Heart left ventricle (tissue), 16 donors: ENCODE measurements at regions of chr6 and their contacts with region 1.

Region 1: DNA sequence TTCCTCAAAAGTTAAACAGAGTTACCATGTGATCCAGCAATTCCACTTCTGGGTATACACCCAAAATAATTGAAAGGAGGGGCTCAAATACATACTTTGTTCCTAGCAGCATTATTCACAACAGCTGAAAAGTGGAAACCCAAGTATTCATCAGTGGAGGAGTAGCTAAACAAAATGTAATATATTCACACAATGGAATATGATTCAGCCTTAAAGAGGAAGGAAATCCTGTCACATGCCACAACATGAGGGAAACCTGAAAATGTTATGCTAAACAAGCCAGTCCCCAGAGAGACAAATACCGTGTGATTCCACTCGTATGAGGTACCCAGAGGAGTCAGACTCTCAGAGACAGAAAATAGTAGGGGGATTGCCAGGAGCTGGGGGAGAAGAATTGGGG is 44.5 kb downstream of the PXDC1 start:
- DNase-seq: no peak
- ATAC-seq: peak in 2 of 4 donors; percentile 22 to 77
- H3K4me3 ChIP-seq: no peak overlapping the region
- H3K27ac ChIP-seq: peak overlapping the region in 3 of 12 donors; percentile 3 to 42 (median 18)
- H3K4me1 ChIP-seq: peaks cover 0 to 11% (median 0%) of the 10 kb centered on the region in 12 donors
- H3K27me3 ChIP-seq: no peaks in the 10 kb centered on the region
- CTCF ChIP-seq: no peak
- POLR2A ChIP-seq: no peak

Region 2: DNA sequence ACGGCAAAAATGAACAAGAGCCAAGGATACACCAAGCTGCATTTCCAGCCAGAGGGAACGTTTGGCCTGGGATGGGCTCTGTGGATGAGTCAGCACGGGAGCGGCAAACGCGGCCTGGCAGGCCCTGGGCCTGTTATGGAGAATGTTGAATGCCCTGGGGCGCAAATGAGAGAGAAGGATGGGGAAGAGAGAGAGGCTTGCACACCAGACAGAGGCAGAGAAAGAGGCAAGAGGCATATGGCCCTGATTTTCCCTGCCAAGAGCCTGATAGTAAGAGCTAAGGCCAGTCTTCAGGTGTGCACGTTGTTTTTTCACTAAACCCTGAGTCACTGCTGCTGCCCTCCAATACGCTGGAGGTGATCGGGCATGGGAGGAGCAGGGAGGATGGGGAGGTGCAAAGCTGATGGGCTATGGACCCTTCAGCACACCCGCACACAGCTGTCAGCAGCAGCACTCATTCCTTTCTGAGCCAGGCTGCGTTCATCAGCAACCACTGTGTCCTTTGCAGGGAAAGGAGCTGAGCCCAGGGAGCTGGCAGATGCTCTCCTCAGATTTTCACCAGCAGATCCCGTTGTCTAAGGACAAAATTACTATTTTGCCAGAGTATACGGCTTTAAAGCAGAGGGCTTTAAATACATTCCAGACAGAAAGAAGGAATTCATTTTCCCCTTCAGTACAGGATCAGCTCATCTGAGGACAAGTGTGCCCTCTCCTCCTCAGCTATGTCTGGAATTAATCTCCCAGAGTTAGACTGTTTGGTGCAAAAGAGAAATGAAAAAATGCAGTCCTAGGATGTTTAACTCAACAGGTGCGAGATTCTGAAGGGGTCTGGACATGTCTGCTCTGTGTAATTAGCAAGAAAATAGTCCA is 188.4 kb before region 1 on chr6:
- intact Hi-C with region 1: loop called in 1 of 10 experiments (anchors 10 kb)
- DNase-seq: no peak
- ATAC-seq: no peak
- H3K4me3 ChIP-seq: no peak overlapping the region
- H3K27ac ChIP-seq: no peak overlapping the region
- H3K4me1 ChIP-seq: no peaks in the 10 kb centered on the region
- H3K27me3 ChIP-seq: peaks cover 0 to 12% (median 3%) of the 10 kb centered on the region in 9 donors
- CTCF ChIP-seq: no peak
- POLR2A ChIP-seq: no peak

Region 3: GRCh38 chr6:3596766-3597165 is 110.3 kb before region 1 on chr6:
- intact Hi-C with region 1: no loop called
- DNase-seq: no peak
- ATAC-seq: no peak
- H3K4me3 ChIP-seq: no peak overlapping the region
- H3K27ac ChIP-seq: no peak overlapping the region
- H3K4me1 ChIP-seq: peaks cover 0 to 10% (median 0%) of the 10 kb centered on the region in 12 donors
- H3K27me3 ChIP-seq: no peaks in the 10 kb centered on the region
- CTCF ChIP-seq: no peak
- POLR2A ChIP-seq: no peak

Region 4: DNA sequence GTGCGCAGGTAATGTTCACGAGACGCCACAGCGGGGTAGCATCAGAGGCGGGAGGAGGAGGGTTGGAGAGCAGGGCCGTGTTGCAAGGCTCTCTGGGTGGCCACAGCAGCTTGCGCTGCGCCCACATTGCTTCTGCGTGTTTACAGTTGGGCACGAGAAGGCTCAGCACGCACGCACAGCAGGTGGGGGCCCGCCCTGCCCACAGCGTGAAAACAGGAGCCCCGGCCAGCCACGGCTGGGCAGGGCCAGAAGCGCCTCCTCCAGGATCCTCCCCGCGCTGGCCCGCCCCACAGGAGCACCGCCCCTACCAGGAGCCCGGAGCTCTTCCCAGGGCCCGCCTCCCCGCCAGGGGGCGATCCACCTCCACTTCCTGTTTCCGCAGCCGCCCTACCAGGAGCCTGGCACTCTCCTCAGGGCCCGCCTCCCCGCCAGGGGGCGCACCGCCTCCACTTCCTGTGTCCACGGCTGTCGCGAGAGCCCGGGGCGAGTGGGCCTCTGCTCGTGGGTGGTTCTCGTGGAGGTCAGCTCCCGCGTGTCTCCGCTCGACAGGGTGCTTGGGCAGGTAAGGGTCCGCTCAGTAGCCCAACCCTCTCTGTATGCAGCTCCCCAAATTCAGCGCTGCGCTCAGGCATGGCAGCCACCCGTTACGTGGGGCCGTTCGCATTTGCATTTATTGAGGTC is 142.0 kb after region 1 on chr6 and contains the start of gene FAM50B:
- intact Hi-C with region 1: no loop called
- DNase-seq: peak; percentile 93 to 96 (median 94)
- ATAC-seq: peak; percentile 95 to 98 (median 98)
- H3K4me3 ChIP-seq: peak within 1 kb of the TSS; percentile 19 to 69 (median 53)
- H3K27ac ChIP-seq: peak within 1 kb of the TSS in 11 of 12 donors; percentile 53 to 83 (median 72)
- H3K4me1 ChIP-seq: peaks cover 0 to 20% (median 2%) of the 10 kb centered on the region in 12 donors
- H3K27me3 ChIP-seq: no peaks in the 10 kb centered on the region
- CTCF ChIP-seq: peak; percentile 91 to 99 (median 94)
- POLR2A ChIP-seq: no peak
- total RNA-seq, gene FAM50B: 13.6 to 29.1 (median 21.5) TPM

Region 5: DNA sequence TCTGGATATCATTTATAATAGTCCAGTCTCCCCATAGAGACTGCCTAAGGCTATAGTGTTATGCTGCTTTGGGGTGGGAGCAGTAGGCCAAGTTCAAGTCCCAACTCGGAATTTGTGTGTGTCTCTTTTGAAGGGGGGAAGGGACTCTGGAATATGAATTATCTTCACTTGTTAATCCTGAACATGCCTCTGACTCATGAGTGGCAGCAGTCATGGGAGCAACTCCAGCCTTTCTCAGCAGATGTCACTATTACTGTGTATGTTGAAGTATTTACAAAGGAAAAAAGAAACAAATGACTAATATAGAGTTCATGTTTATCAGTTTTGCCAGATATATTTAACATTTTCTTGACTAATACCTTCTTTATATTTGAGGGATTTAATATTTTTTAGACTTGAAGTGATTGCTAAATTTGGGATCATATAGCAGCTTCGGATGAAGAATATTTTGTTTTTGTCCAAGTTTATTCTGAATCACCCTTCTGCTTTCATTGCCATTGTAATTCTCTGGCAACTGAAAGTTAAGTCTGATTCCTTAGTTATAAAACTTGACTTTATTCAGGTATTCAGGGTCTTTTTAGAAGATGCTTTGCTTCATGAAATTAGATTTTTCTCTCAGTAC is 348.5 kb after region 1 on chr6:
- intact Hi-C with region 1: no loop called
- DNase-seq: peak in 2 of 5 donors; percentile 35 to 38
- ATAC-seq: peak; percentile 80 to 91 (median 87)
- H3K4me3 ChIP-seq: no peak overlapping the region
- H3K27ac ChIP-seq: peak overlapping the region in 7 of 12 donors; percentile 0 to 35 (median 11)
- H3K4me1 ChIP-seq: peaks cover 0 to 13% (median 6%) of the 10 kb centered on the region in 12 donors
- H3K27me3 ChIP-seq: no peaks in the 10 kb centered on the region
- CTCF ChIP-seq: peak in 11 of 12 donors; percentile 23 to 70 (median 52)
- POLR2A ChIP-seq: no peak